Activated CD4-positive, alpha-beta memory T cell treated with anti-CD3 and anti-CD28 coated beads, Interleukin-2, amount 10 ng/mL, durations not matched to agents 7 days and 5 days (primary cell): ENCODE measurements at regions of chr3 and their contacts with region 1.

Region 1: DNA sequence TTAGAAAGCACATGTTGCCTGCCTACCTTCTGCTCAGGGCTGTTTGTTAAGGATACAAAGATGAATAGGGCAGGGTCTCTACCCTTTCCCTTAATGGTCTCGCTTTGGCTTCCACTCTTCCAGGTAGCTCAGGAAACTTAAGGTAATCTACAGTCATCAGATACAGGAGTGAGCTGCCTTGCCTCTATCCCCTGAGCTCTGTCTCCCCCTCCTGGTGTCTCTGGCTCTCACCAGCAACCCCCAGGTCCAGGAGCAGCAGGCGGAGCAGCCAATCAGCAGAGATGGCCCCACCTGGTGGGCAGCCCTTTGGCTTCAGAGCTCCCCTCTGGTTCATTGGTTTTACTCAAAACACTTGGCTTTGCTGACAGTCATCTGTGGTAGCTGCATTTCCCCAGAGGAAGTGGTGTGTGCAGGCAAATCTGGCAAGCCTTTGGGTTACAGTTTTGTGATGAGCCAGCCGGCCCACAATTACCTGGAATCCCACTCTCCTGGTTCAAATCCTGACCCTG is 8.5 kb upstream of the CX3CR1 start:
- DNase-seq: peak; percentile 90
- H3K4me3 Mint-ChIP-seq: no peak overlapping the region
- H3K27ac Mint-ChIP-seq: peak overlapping the region; percentile 22
- H3K4me1 Mint-ChIP-seq: peaks cover 61% of the 10 kb centered on the region
- H3K27me3 Mint-ChIP-seq: no peaks in the 10 kb centered on the region

Region 2: GRCh38 chr3:38978729-38979128 is 309.6 kb before region 1 on chr3:
- CTCF ChIA-PET with region 1: no interaction called
- POLR2A ChIA-PET with region 1: no interaction called
- DNase-seq: no peak
- H3K4me3 Mint-ChIP-seq: no peak overlapping the region
- H3K27ac Mint-ChIP-seq: no peak overlapping the region
- H3K4me1 Mint-ChIP-seq: no peaks in the 10 kb centered on the region
- H3K27me3 Mint-ChIP-seq: peaks cover 13% of the 10 kb centered on the region

Region 3: GRCh38 chr3:39101022-39101689 is 187.2 kb before region 1 on chr3:
- CTCF ChIA-PET with region 1: interaction called, 35 read pairs
- POLR2A ChIA-PET with region 1: interaction called, 3 read pairs
- DNase-seq: peak; percentile 53
- H3K4me3 Mint-ChIP-seq: no peak overlapping the region
- H3K27ac Mint-ChIP-seq: peak overlapping the region; percentile 20
- H3K4me1 Mint-ChIP-seq: peaks cover 33% of the 10 kb centered on the region
- H3K27me3 Mint-ChIP-seq: no peaks in the 10 kb centered on the region

Region 4: DNA sequence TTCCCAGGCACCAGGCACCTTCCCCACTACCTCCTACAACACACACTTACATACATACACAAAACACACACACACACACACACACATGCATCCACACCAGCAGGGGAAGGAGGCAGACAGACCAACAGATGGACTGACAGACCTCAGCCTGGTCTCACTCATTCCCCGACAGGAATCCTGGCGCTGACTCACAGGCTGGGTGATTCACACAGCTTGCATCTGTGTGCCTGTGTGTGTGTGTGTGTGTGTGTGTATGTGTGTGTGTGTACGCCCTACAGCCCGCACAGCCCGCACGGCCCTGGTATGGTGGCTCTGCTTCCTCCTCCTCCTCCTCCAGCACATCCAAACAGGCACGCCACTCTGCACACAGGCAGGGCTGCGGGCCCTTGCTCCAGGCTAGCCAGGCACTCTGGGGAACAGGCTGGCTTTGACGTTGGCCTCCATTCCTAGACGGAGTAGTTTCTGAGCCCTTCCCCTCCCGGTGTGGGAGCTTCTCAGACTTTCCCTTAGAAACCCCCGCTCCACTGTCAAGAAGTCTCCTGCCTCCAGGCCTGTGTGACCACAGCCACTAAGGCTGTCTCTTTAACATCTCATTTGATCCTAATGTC is 141.3 kb before region 1 on chr3:
- CTCF ChIA-PET with region 1: interaction called, 10 read pairs
- POLR2A ChIA-PET with region 1: interaction called, 4 read pairs
- DNase-seq: peak; percentile 82
- H3K4me3 Mint-ChIP-seq: peak overlapping the region; percentile 98
- H3K27ac Mint-ChIP-seq: peak overlapping the region; percentile 98
- H3K4me1 Mint-ChIP-seq: peaks cover 73% of the 10 kb centered on the region
- H3K27me3 Mint-ChIP-seq: no peaks in the 10 kb centered on the region

Region 5: DNA sequence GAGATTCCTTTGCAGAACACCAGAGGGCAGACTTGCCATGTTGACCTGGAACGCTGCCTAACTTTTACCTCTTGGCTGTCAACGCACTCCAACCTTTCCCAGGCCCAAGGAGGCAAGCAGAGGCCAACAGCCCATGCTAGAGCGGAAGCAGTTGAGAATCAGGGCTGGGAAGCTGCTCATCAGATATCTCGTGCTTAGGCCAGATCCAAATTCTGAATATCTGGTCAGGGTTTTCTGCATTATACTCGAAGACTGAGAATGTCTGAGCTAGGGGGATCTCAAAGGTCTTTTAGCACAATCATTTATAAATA is 98.4 kb before region 1 on chr3:
- CTCF ChIA-PET with region 1: interaction called, 633 read pairs
- POLR2A ChIA-PET with region 1: interaction called, 39 read pairs
- DNase-seq: peak; percentile 69
- H3K4me3 Mint-ChIP-seq: no peak overlapping the region
- H3K27ac Mint-ChIP-seq: no peak overlapping the region
- H3K4me1 Mint-ChIP-seq: peaks cover 13% of the 10 kb centered on the region
- H3K27me3 Mint-ChIP-seq: no peaks in the 10 kb centered on the region

Region 6: DNA sequence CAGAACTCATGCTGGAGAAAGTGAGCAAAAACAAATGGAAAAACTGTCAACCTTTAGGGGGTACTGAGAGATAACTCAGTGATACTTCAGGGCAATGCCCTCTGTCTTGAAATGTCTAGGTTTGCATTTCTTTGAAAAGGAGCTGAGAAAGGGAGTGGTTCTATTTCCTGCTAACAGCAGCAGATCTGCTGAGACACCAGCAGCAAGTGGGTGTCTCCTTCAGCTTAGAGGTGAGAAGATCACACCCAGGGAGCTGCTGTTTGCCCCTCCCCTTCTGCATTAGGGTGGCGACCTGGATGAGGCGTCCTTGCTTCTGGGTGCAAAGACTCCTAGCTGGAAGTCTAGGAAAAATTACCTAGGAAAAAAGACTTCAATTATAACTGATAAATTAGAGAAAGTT is 53.6 kb before region 1 on chr3:
- CTCF ChIA-PET with region 1: interaction called, 40 read pairs
- POLR2A ChIA-PET with region 1: interaction called, 3 read pairs
- DNase-seq: peak; percentile 67
- H3K4me3 Mint-ChIP-seq: peak overlapping the region; percentile 26
- H3K27ac Mint-ChIP-seq: peak overlapping the region; percentile 81
- H3K4me1 Mint-ChIP-seq: peaks cover 36% of the 10 kb centered on the region
- H3K27me3 Mint-ChIP-seq: peaks cover 43% of the 10 kb centered on the region

Region 7: GRCh38 chr3:39302178-39302577 is 13.8 kb after region 1 on chr3:
- CTCF ChIA-PET with region 1: interaction called, 25 read pairs
- POLR2A ChIA-PET with region 1: no interaction called
- DNase-seq: no peak
- H3K4me3 Mint-ChIP-seq: no peak overlapping the region
- H3K27ac Mint-ChIP-seq: no peak overlapping the region
- H3K4me1 Mint-ChIP-seq: peaks cover 3% of the 10 kb centered on the region
- H3K27me3 Mint-ChIP-seq: peaks cover 59% of the 10 kb centered on the region

Region 8: GRCh38 chr3:39406368-39407258 is 118.3 kb after region 1 on chr3 and contains the start of gene RPSA:
- CTCF ChIA-PET with region 1: interaction called, 13 read pairs
- POLR2A ChIA-PET with region 1: interaction called, 8 read pairs
- DNase-seq: peak; percentile 98
- H3K4me3 Mint-ChIP-seq: peak within 1 kb of the TSS; percentile 85
- H3K27ac Mint-ChIP-seq: peak within 1 kb of the TSS; percentile 89
- H3K4me1 Mint-ChIP-seq: peaks cover 56% of the 10 kb centered on the region
- H3K27me3 Mint-ChIP-seq: no peaks in the 10 kb centered on the region
- total RNA-seq, gene RPSA: 1,345 to 1,384 TPM

Region 9: DNA sequence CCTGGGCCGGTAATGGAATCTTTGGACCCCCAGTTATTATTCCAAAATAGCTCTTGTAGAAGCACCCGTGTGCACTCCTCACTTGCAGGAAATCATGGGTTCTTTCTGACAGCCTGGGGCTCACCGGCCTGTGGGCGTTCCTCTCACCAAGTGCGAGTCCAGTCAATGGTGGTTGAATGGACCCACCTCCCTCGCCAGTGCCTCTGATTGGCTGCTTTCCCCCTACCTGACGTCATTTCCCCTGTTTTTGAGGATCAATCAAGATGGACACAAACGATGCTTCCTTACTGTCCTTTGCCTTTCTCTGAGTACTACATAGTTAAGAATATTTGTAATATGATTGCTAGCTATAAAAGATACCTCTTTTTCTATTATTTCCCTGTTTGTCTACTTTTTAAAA is 197.2 kb after region 1 on chr3:
- CTCF ChIA-PET with region 1: no interaction called
- POLR2A ChIA-PET with region 1: no interaction called
- DNase-seq: no peak
- H3K4me3 Mint-ChIP-seq: no peak overlapping the region
- H3K27ac Mint-ChIP-seq: no peak overlapping the region
- H3K4me1 Mint-ChIP-seq: no peaks in the 10 kb centered on the region
- H3K27me3 Mint-ChIP-seq: peaks cover 17% of the 10 kb centered on the region